Mammary epithelial cell (primary cell): ENCODE measurements at regions of chr20 and their contacts with region 1.

Region 1: GRCh38 chr20:5658912-5659345 is 91.3 kb upstream of the SHLD1 start:
- DNase-seq: peak; percentile 83
- H3K4me3 ChIP-seq: no peak overlapping the region
- H3K27ac ChIP-seq: peak overlapping the region; percentile 54
- H3K4me1 ChIP-seq: peaks cover 43% of the 10 kb centered on the region
- H3K27me3 ChIP-seq: no peaks in the 10 kb centered on the region
- CTCF ChIP-seq: no peak

Region 2: GRCh38 chr20:5674176-5674660 is 15.3 kb after region 1 on chr20:
- CTCF ChIA-PET with region 1: no interaction called
- dilution Hi-C with region 1: no loop called
- in situ Hi-C with region 1: no loop called
- intact Hi-C with region 1: loop called (anchors 2 kb)
- DNase-seq: peak; percentile 90
- H3K4me3 ChIP-seq: no peak overlapping the region
- H3K27ac ChIP-seq: no peak overlapping the region
- H3K4me1 ChIP-seq: peaks cover 14% of the 10 kb centered on the region
- H3K27me3 ChIP-seq: no peaks in the 10 kb centered on the region
- CTCF ChIP-seq: no peak

Region 3: GRCh38 chr20:5749952-5750779 is 91.2 kb after region 1 on chr20 and contains the start of gene SHLD1:
- CTCF ChIA-PET with region 1: no interaction called
- dilution Hi-C with region 1: no loop called
- in situ Hi-C with region 1: no loop called
- intact Hi-C with region 1: loop called (anchors 1 kb)
- DNase-seq: peak; percentile 72
- H3K4me3 ChIP-seq: peak within 1 kb of the TSS; percentile 59 to 82 (median 65)
- H3K27ac ChIP-seq: peak within 1 kb of the TSS; percentile 47
- H3K4me1 ChIP-seq: peaks cover 3% of the 10 kb centered on the region
- H3K27me3 ChIP-seq: no peaks in the 10 kb centered on the region
- CTCF ChIP-seq: no peak
- total RNA-seq, gene SHLD1: 1.0 to 2.0 TPM